GM12878 (cell line): ENCODE measurements at regions of chr22 and their contacts with region 1.

Region 1: DNA sequence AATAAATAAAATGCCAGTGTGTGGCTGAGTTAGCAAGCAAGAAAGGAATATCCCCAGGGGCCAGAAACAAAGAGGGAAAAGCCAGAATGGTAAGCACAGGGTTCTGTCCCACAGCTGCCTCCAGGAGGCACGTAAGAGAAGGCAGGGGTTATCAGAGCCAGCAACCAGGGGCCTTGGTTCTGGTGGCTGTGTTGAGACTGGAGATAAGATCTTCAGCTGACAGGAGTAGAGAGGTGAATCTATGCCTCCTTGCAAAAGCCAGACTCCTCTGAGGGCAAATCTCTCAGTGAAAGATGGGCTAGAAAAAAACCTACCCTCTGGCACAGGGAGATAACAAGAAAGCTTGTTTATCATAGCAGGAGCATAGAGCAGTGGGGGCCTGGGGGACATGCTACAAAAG is 29.8 kb upstream of the NFAM1 start:
- DNase-seq: no peak
- ATAC-seq: no peak
- H3K4me3 ChIP-seq: no peak overlapping the region
- H3K27ac ChIP-seq: no peak overlapping the region
- H3K4me1 ChIP-seq: peaks cover 10% of the 10 kb centered on the region
- H3K27me3 ChIP-seq: no peaks in the 10 kb centered on the region
- CTCF ChIP-seq: no peak
- EP300 ChIP-seq: no peak
- POLR2A ChIP-seq: no peak
- RAD21 ChIP-seq: no peak

Region 2: DNA sequence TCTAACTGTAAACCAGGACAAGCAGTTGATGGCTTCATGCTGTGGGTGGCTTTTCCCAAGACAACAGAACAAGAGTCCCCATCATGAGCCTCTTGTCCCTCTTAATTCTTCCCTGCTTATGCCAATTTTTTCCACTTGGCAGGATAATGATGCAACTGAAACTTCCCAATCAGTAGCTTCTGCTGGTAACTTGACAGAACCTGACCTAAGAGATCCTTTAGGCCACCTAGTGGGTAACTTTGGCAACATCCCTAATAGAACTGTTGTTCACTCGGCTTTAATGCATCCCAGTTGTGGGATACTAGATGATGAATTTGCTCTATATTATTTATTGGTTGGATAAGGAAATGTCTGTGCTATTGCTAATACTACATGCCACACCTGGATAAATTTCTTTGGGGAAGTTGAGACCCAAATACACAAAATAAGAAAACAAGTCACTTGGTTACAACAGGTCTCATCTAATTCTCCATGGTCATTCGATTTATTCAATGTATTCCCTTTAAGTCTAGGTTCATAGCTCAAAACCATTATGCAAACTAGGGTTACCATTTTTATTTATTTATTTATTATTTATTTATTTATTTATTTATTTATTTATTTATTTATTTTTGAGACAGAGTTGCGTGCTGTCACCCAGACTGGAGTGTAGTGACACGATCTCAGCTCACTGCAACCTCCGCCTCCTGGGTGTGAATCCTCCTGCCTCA is 11.6 kb after region 1 on chr22:
- CTCF ChIA-PET with region 1: interaction called, 18 read pairs
- POLR2A ChIA-PET with region 1: interaction called, 3 read pairs
- RAD21 ChIA-PET with region 1: interaction called, 6 read pairs
- SMC1A ChIA-PET with region 1: interaction called, 6 read pairs
- in situ Hi-C with region 1: no loop called
- intact Hi-C with region 1: no loop called
- DNase-seq: no peak
- ATAC-seq: peak; percentile 89
- H3K4me3 ChIP-seq: no peak overlapping the region
- H3K27ac ChIP-seq: no peak overlapping the region
- H3K4me1 ChIP-seq: no peaks in the 10 kb centered on the region
- H3K27me3 ChIP-seq: 0 out of 4 replicates have a peak, but pooled peaks cover 1 to 3% of the 10 kb centered on the region in 2 experiments
- CTCF ChIP-seq: peak; percentile 67 to 73 (median 70)
- EP300 ChIP-seq: no peak
- POLR2A ChIP-seq: no peak
- RAD21 ChIP-seq: peak; percentile 68